ENCODE measurements at regions of chr6 and their contacts with region 1.

Region 1: GRCh38 chr6:89610149-89610642 is 28.4 kb downstream of the LYRM2 start:
- DNase-seq: no peak
- H3K4me3 ChIP-seq: no peak overlapping the region
- H3K27ac ChIP-seq: no peak overlapping the region
- H3K4me1 ChIP-seq: no peaks in the 10 kb centered on the region
- H3K27me3 ChIP-seq: no peaks in the 10 kb centered on the region
- CTCF ChIP-seq: peak; percentile 69 to 76 (median 76)
- POLR2A ChIP-seq: no peak

Region 2: DNA sequence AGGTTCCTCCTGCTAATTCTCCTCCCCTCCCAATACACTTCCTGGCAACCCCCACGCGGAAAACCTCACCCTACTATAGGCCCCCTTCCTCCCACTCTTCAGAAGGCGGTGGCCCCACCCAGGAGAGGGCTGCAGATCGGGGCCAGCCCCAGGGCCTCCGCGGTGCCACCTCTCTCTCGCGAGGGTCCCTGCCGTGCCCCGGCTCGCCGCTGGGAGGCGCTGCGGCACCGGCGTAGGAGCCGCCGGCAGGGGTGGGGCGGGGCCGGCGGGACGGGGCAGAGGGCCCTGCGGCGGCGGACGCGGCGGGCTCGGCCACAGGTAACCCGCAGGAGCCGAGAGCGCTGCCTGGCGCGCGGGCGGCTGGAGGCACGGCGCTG is 177.3 kb before region 1 on chr6 and contains the start of gene ANKRD6:
- intact Hi-C with region 1: loop called (anchors 2 kb)
- DNase-seq: no peak
- H3K4me3 ChIP-seq: peak within 1 kb of the TSS; percentile 83 to 85
- H3K27ac ChIP-seq: peak within 1 kb of the TSS; percentile 77
- H3K4me1 ChIP-seq: peaks cover 19% of the 10 kb centered on the region
- H3K27me3 ChIP-seq: no peaks in the 10 kb centered on the region
- CTCF ChIP-seq: peak; percentile 68 to 87 (median 82)
- POLR2A ChIP-seq: peak in 1 of 2 donors; percentile 14
- total RNA-seq, gene ANKRD6: 13.3 TPM

Region 3: GRCh38 chr6:89527634-89528033 is 82.6 kb before region 1 on chr6:
- intact Hi-C with region 1: no loop called
- DNase-seq: no peak
- H3K4me3 ChIP-seq: no peak overlapping the region
- H3K27ac ChIP-seq: no peak overlapping the region
- H3K4me1 ChIP-seq: no peaks in the 10 kb centered on the region
- H3K27me3 ChIP-seq: no peaks in the 10 kb centered on the region
- CTCF ChIP-seq: no peak
- POLR2A ChIP-seq: no peak